Caco-2 (cell line): ENCODE measurements at regions of chr9 and their contacts with region 1.

Region 1: GRCh38 chr9:20622330-20623020 is at the start of gene MLLT3:
- DNase-seq: peak; percentile 94
- H3K4me3 ChIP-seq: peak within 1 kb of the TSS; percentile 62
- H3K4me3 Mint-ChIP-seq: peak within 1 kb of the TSS; percentile 69
- H3K27ac Mint-ChIP-seq: peak within 1 kb of the TSS; percentile 76
- H3K4me1 ChIP-seq: peaks cover 9% of the 10 kb centered on the region; the same call in 1 of the 2 replicates
- H3K4me1 Mint-ChIP-seq: peaks cover 6% of the 10 kb centered on the region
- H3K27me3 ChIP-seq: no peaks in the 10 kb centered on the region
- H3K27me3 Mint-ChIP-seq: no peaks in the 10 kb centered on the region
- CTCF ChIP-seq: peak in 1 of 2 experiments; percentile 15
- total RNA-seq, gene MLLT3: 22.0 and 24.4 TPM in 2 replicates

Region 2: GRCh38 chr9:20426019-20426418 is 196.5 kb before region 1 on chr9:
- CTCF ChIA-PET with region 1: no interaction called
- POLR2A ChIA-PET with region 1: no interaction called
- intact Hi-C with region 1: loop called (anchors 5 kb)
- DNase-seq: no peak
- H3K4me3 ChIP-seq: no peak overlapping the region
- H3K4me3 Mint-ChIP-seq: no peak overlapping the region
- H3K27ac Mint-ChIP-seq: no peak overlapping the region
- H3K4me1 ChIP-seq: no peaks in the 10 kb centered on the region
- H3K4me1 Mint-ChIP-seq: no peaks in the 10 kb centered on the region
- H3K27me3 ChIP-seq: no peaks in the 10 kb centered on the region
- H3K27me3 Mint-ChIP-seq: no peaks in the 10 kb centered on the region
- CTCF ChIP-seq: no peak

Region 3: GRCh38 chr9:20611751-20612287 is 10.7 kb before region 1 on chr9:
- CTCF ChIA-PET with region 1: interaction called, 5 read pairs
- POLR2A ChIA-PET with region 1: interaction called, 9 read pairs
- intact Hi-C with region 1: loop called (anchors 1 kb)
- DNase-seq: peak in 1 of 2 experiments; percentile 60
- H3K4me3 ChIP-seq: 0 out of 2 replicates have a peak overlapping the region, but pooled peaks have one; percentile 6
- H3K4me3 Mint-ChIP-seq: peak overlapping the region; percentile 55
- H3K27ac Mint-ChIP-seq: peak overlapping the region; percentile 74
- H3K4me1 ChIP-seq: peaks cover 58% of the 10 kb centered on the region
- H3K4me1 Mint-ChIP-seq: peaks cover 15% of the 10 kb centered on the region
- H3K27me3 ChIP-seq: no peaks in the 10 kb centered on the region
- H3K27me3 Mint-ChIP-seq: no peaks in the 10 kb centered on the region
- CTCF ChIP-seq: peak in 1 of 2 experiments; percentile 41

Region 4: DNA sequence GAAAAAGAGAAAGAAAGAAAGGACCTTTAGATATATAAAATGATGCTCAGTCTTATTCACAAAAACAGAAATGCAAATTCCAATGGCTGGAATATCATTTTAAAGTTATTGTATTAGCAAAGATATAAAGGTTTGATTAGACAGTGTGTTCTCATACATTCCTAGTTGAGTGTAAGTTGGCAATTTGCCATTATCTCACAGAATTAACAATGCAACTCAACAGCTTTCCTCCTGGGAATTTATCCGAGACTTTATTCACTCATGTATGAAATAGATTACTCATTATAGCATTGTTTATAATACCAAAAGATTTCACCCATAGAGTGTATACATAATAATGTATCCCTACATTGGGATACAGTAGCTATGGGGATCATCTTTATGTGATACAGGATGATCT is 26.9 kb after region 1 on chr9:
- CTCF ChIA-PET with region 1: no interaction called
- POLR2A ChIA-PET with region 1: no interaction called
- intact Hi-C with region 1: no loop called
- DNase-seq: no peak
- H3K4me3 ChIP-seq: no peak overlapping the region
- H3K4me3 Mint-ChIP-seq: no peak overlapping the region
- H3K27ac Mint-ChIP-seq: no peak overlapping the region
- H3K4me1 ChIP-seq: peaks cover 7% of the 10 kb centered on the region
- H3K4me1 Mint-ChIP-seq: peaks cover 7% of the 10 kb centered on the region
- H3K27me3 ChIP-seq: no peaks in the 10 kb centered on the region
- H3K27me3 Mint-ChIP-seq: no peaks in the 10 kb centered on the region
- CTCF ChIP-seq: no peak

Region 5: DNA sequence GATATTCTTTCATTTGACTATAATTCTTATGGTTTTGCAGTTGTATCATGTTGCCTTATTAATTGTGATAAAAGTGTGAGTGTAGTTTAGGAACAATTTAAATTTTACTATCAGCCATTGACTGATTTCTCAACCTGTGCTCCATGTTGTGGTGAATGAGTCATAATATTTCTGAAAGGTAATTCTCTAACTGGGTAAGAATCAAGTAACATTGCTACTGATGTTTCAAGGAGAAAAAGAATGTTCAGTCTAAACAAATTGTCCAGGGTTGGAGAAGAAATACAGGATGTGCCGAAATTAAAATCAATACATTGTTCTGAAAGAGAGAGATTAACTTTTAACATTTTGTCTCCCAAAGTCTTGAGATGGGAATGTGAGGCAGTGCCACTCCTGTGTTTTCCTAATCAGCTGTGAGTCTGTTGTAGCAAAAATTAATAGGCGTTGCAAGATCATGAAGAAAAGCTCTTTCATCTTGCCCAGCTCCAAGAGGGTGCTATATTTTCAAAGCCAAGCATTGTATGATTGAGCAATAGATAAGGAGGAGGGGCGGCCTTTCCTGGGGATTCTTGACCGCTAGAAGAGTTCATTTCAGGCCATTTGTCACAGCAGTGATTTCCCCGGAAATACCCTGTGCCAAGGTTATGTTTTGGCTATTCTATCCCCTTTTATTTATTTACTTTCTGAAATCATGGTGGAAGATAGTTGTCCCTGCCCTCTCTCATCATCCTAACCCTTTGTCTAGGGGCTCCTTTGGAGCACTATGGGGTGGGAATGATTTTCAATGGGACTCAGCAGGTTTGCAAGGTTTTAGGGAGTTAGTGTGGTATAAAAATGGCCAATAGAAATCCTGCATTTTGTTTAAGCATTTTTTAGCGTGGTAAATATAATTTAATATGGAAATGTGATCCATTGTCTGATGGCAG is 213.2 kb after region 1 on chr9:
- CTCF ChIA-PET with region 1: no interaction called
- POLR2A ChIA-PET with region 1: no interaction called
- intact Hi-C with region 1: loop called (anchors 5 kb)
- DNase-seq: peak in 1 of 2 experiments; percentile 10
- H3K4me3 ChIP-seq: no peak overlapping the region
- H3K4me3 Mint-ChIP-seq: no peak overlapping the region
- H3K27ac Mint-ChIP-seq: no peak overlapping the region
- H3K4me1 ChIP-seq: 0 out of 2 replicates have a peak, but pooled peaks cover 13% of the 10 kb centered on the region
- H3K4me1 Mint-ChIP-seq: no peaks in the 10 kb centered on the region
- H3K27me3 ChIP-seq: no peaks in the 10 kb centered on the region
- H3K27me3 Mint-ChIP-seq: no peaks in the 10 kb centered on the region
- CTCF ChIP-seq: no peak

Region 6: DNA sequence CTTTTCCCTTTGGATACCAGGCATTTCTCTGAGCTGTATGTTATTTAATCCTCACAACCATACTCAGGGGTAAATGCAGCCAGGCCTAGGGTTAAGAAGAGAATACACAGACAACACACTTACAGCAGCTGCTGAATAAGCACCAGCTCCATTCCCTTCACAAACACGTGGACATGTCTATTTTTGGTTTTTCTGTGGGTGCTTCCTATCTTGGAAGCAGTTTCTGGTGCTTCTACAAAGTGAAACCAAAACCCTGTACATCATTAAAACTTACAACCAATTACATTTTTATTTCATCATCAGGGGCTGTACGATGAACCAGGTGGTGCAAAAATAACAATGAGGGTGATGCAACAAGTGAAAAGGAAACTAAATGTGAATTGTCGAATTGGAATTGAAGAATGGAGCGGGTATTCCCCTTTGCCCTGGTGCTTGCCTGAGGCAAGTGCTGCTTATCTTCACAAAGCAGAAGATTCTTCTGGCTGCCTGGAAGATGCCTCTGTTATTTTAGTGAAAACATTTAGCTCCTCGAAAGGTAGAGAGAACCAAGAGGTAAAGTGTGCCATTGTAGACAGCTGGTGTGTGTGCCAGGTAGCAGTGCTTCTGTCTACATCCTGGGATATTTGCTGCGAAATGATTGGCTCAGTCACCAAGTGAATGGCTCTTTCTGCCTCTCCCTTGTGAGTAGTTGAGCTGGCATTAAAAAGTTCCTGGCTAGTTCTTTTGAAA is 473.9 kb after region 1 on chr9:
- CTCF ChIA-PET with region 1: no interaction called
- POLR2A ChIA-PET with region 1: no interaction called
- intact Hi-C with region 1: loop called (anchors 5 kb)
- DNase-seq: peak in 1 of 2 experiments; percentile 17
- H3K4me3 ChIP-seq: no peak overlapping the region
- H3K4me3 Mint-ChIP-seq: peak overlapping the region; percentile 1
- H3K27ac Mint-ChIP-seq: peak overlapping the region; percentile 55
- H3K4me1 ChIP-seq: peaks cover 34% of the 10 kb centered on the region
- H3K4me1 Mint-ChIP-seq: peaks cover 19% of the 10 kb centered on the region
- H3K27me3 ChIP-seq: no peaks in the 10 kb centered on the region
- H3K27me3 Mint-ChIP-seq: no peaks in the 10 kb centered on the region
- CTCF ChIP-seq: no peak